ENCODE measurements at regions of chr21 and their contacts with region 1.

Region 1: DNA sequence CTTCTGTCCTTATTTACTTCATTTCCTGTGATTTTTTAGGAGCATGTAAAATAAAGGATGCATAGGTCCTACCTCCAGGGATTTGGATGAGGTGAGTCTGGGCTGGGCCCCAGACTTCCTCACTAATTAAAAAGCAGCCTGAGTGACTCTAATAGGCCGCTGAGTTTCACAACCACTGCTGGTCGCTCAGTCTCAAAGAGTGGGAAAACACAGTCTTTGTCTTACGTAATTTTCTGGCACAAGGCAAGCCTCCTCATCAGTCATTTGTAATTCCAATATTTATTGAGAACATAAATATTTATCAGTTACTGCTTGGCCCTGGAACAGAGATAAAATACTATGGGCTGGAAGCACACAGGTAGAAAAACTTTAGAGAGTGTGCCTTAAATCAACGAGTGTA is 195.4 kb upstream of the RUNX1 start:
- DNase-seq: no peak
- ATAC-seq: no peak
- H3K4me3 ChIP-seq: no peak overlapping the region
- H3K27ac ChIP-seq: no peak overlapping the region
- H3K4me1 ChIP-seq: no peaks in the 10 kb centered on the region
- H3K27me3 ChIP-seq: no peaks in the 10 kb centered on the region
- CTCF ChIP-seq: no peak

Region 2: GRCh38 chr21:34928637-34929036 is 315.9 kb before region 1 on chr21:
- CTCF ChIA-PET with region 1: no interaction called
- POLR2A ChIA-PET with region 1: interaction called, 12 read pairs
- in situ Hi-C with region 1: no loop called
- intact Hi-C with region 1: no loop called
- DNase-seq: no peak
- ATAC-seq: no peak
- H3K4me3 ChIP-seq: no peak overlapping the region
- H3K27ac ChIP-seq: no peak overlapping the region
- H3K4me1 ChIP-seq: no peaks in the 10 kb centered on the region
- H3K27me3 ChIP-seq: no peaks in the 10 kb centered on the region
- CTCF ChIP-seq: no peak

Region 3: GRCh38 chr21:35309316-35309715 is 64.8 kb after region 1 on chr21:
- CTCF ChIA-PET with region 1: no interaction called
- POLR2A ChIA-PET with region 1: no interaction called
- in situ Hi-C with region 1: no loop called
- intact Hi-C with region 1: no loop called
- DNase-seq: no peak
- ATAC-seq: no peak
- H3K4me3 ChIP-seq: no peak overlapping the region
- H3K27ac ChIP-seq: no peak overlapping the region
- H3K4me1 ChIP-seq: no peaks in the 10 kb centered on the region
- H3K27me3 ChIP-seq: no peaks in the 10 kb centered on the region
- CTCF ChIP-seq: no peak